Activated CD4-positive, alpha-beta T cell treated with anti-CD3 and anti-CD28 coated beads for 36 hours (primary cell): ENCODE measurements at regions of chr2 and their contacts with region 1.

Region 1: GRCh38 chr2:27977608-27978312 is 87.2 kb downstream of the BABAM2 start:
- DNase-seq: peak; percentile 67
- ATAC-seq: peak; percentile 90
- H3K4me3 Mint-ChIP-seq: no peak overlapping the region
- H3K27ac Mint-ChIP-seq: peak overlapping the region; percentile 79
- H3K4me1 Mint-ChIP-seq: peaks cover 46% of the 10 kb centered on the region
- H3K27me3 Mint-ChIP-seq: no peaks in the 10 kb centered on the region

Region 2: DNA sequence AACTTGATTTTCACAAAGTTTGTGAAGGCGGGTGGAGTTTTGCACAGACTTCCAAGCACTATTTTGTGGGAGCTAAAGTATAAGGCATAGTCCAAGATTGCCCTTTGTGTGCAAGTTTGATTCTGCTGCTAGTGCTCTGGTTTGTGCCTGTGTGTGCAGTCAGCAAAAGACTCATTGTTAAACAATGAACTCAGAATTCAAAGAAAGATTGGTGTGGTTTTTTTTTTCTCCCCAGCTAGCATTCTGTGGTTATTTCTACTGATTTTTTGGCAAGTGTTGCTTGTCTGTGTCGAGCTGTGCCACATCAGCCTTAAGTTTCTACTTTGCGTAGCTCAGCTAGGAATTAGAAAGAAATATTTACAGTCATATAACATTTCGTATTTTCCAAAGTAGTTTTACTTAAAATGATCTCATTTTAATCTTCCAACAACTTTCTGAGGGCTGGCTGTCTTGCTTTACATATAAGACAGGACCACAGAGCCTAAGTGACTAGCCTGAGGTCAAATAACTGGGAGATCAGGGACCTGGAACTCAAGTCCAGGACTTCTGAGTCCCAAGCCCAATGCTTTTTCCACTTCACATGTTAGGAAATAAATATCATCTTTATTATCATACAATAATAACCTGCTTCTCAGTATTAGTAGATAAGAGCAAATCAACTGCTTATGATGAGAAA is 17.4 kb before region 1 on chr2:
- CTCF ChIA-PET with region 1: interaction called, 3 read pairs
- POLR2A ChIA-PET with region 1: interaction called, 4 read pairs
- intact Hi-C with region 1: loop called in 1 of 2 experiments (anchors 2 kb)
- DNase-seq: peak; percentile 27
- ATAC-seq: peak; percentile 73
- H3K4me3 Mint-ChIP-seq: peak overlapping the region; percentile 6
- H3K27ac Mint-ChIP-seq: peak overlapping the region; percentile 34
- H3K4me1 Mint-ChIP-seq: peaks cover 72% of the 10 kb centered on the region
- H3K27me3 Mint-ChIP-seq: no peaks in the 10 kb centered on the region

Region 3: DNA sequence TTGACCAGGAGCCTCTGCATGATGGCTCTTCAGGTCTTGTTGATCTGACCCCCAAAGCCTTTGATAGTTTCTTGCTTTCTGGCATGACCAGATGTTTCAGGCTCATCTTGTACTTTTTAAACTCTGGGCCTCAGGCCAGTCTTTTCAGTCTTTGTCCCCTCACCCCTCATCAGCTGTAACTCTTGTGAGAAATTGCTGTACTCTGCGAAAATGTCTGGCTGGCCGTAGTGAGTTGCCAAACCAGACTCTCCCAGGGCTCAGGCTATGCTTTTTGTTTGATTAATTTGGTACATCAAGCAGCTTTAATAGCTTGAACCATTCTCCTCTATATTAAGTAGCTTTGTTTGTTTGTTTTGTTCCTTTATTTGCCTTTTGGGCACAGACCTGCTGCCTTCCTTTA is 11.3 kb before region 1 on chr2:
- CTCF ChIA-PET with region 1: interaction called, 3 read pairs
- POLR2A ChIA-PET with region 1: interaction called, 4 read pairs
- intact Hi-C with region 1: loop called in 1 of 2 experiments (anchors 1 kb)
- DNase-seq: no peak
- ATAC-seq: no peak
- H3K4me3 Mint-ChIP-seq: no peak overlapping the region
- H3K27ac Mint-ChIP-seq: peak overlapping the region; percentile 17
- H3K4me1 Mint-ChIP-seq: peaks cover 55% of the 10 kb centered on the region
- H3K27me3 Mint-ChIP-seq: no peaks in the 10 kb centered on the region

Region 4: GRCh38 chr2:28521663-28522062 is 543.9 kb after region 1 on chr2:
- CTCF ChIA-PET with region 1: no interaction called
- POLR2A ChIA-PET with region 1: no interaction called
- intact Hi-C with region 1: no loop called
- DNase-seq: no peak
- ATAC-seq: no peak
- H3K4me3 Mint-ChIP-seq: no peak overlapping the region
- H3K27ac Mint-ChIP-seq: no peak overlapping the region
- H3K4me1 Mint-ChIP-seq: no peaks in the 10 kb centered on the region
- H3K27me3 Mint-ChIP-seq: peaks cover 42% of the 10 kb centered on the region